ENCODE measurements at regions of chrX and their contacts with region 1.

Region 1: DNA sequence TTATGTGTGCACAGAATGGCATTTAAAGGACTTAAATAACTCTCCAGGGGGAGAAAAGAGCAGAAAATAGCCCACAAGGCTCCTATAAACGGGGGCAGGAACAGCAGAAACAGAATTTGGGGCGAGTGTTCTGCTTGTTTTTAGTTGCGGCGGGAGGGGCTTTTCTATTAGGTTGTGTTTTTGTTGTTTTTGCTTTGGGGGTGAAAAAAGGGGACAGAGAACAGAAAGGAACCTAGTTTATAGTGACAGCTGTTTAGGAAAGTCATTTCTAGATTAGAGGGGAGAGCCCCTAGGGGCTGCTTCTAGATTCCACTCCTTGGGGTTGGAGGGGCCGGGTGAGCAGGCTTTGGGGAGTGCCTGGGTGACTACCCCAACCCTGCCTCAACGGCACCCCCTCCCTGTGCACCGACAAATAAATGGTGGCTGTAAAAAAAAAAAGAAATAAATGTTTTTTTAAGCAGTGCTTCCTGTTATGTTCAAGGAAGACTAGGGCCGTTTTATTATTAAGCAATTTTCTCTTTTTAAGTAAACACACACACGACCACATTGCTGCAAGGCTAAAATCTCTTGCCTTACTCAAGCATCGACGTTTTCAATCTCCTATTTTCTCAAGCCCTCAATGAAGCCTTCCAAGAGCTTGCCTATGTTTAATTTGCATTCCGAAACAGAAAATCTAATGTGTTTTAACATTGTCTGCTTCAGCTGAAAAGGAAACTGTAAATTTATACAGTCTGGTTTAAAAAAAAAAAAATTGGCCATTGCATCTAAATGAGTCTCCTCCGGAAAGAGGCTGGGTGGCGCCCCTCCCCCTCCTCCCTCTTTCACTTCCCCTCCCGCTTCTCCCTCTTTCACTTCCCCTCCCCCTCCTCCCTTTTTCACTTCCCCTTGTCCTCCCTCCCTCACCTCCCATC is 123.3 kb upstream of the TBL1X start:
- DNase-seq: no peak
- H3K4me3 ChIP-seq: peak overlapping the region in 1 of 2 donors; percentile 18
- H3K27ac ChIP-seq: peak overlapping the region; percentile 69
- H3K4me1 ChIP-seq: peaks cover 15% of the 10 kb centered on the region
- H3K27me3 ChIP-seq: no peaks in the 10 kb centered on the region
- CTCF ChIP-seq: no peak
- POLR2A ChIP-seq: no peak

Region 2: GRCh38 chrX:9464435-9465371 is 123.2 kb after region 1 on chrX and contains the start of gene TBL1X:
- intact Hi-C with region 1: loop called (anchors 2 kb)
- DNase-seq: no peak
- H3K4me3 ChIP-seq: peak within 1 kb of the TSS; percentile 63 to 67
- H3K27ac ChIP-seq: peak within 1 kb of the TSS; percentile 86
- H3K4me1 ChIP-seq: peaks cover 44% of the 10 kb centered on the region
- H3K27me3 ChIP-seq: no peaks in the 10 kb centered on the region
- CTCF ChIP-seq: no peak
- POLR2A ChIP-seq: no peak
- total RNA-seq, gene TBL1X: 41.3 TPM

Measured in vagina (tissue), 2 donors.